IMR-90 (cell line): ENCODE measurements at regions of chr1 and their contacts with region 1.

Region 1: GRCh38 chr1:117592163-117592562 is 13.7 kb upstream of the TENT5C start:
- DNase-seq: no peak
- ATAC-seq: no peak
- H3K4me3 ChIP-seq: no peak overlapping the region
- H3K27ac ChIP-seq: no peak overlapping the region
- H3K4me1 ChIP-seq: no peaks in the 10 kb centered on the region
- H3K27me3 ChIP-seq: peaks cover 13% of the 10 kb centered on the region
- CTCF ChIP-seq: no peak
- POLR2A ChIP-seq: no peak
- RAD21 ChIP-seq: no peak

Region 2: GRCh38 chr1:117544509-117545109 is 47.6 kb before region 1 on chr1:
- CTCF ChIA-PET with region 1: no interaction called
- POLR2A ChIA-PET with region 1: no interaction called
- dilution Hi-C with region 1: no loop called
- in situ Hi-C with region 1: no loop called
- intact Hi-C with region 1: loop called (anchors 2 kb)
- DNase-seq: no peak
- ATAC-seq: no peak; the same call in 1 of the 2 replicates
- H3K4me3 ChIP-seq: no peak overlapping the region
- H3K27ac ChIP-seq: no peak overlapping the region
- H3K4me1 ChIP-seq: peaks cover 5% of the 10 kb centered on the region; the same call in 1 of the 2 replicates
- H3K27me3 ChIP-seq: no peaks in the 10 kb centered on the region
- CTCF ChIP-seq: no peak
- POLR2A ChIP-seq: no peak
- RAD21 ChIP-seq: no peak

Region 3: DNA sequence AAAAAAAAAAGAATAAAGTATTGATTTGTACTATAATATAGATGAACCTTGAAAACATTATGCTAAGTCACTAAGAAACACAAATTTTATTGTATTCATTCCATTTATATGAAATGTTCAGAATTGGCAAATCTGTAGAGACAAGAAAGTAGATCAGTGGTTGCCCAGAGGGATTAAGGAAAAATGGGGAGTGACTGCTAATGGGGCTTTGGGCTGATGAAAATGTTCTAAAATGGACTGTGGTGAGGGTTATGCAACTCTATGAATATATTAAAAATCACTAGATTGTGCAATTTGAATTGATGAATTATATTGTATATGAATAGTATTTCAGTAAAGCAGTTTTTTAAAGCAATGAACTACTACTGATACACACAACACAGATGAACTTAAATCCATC is 327.2 kb after region 1 on chr1:
- CTCF ChIA-PET with region 1: no interaction called
- POLR2A ChIA-PET with region 1: no interaction called
- dilution Hi-C with region 1: no loop called
- in situ Hi-C with region 1: no loop called
- intact Hi-C with region 1: no loop called
- DNase-seq: no peak
- ATAC-seq: no peak
- H3K4me3 ChIP-seq: no peak overlapping the region
- H3K27ac ChIP-seq: no peak overlapping the region
- H3K4me1 ChIP-seq: no peaks in the 10 kb centered on the region
- H3K27me3 ChIP-seq: no peaks in the 10 kb centered on the region
- CTCF ChIP-seq: no peak
- POLR2A ChIP-seq: no peak
- RAD21 ChIP-seq: no peak

Region 4: GRCh38 chr1:117985973-117986372 is 393.8 kb after region 1 on chr1:
- CTCF ChIA-PET with region 1: no interaction called
- POLR2A ChIA-PET with region 1: no interaction called
- dilution Hi-C with region 1: no loop called
- in situ Hi-C with region 1: no loop called
- intact Hi-C with region 1: no loop called
- DNase-seq: no peak
- ATAC-seq: no peak
- H3K4me3 ChIP-seq: no peak overlapping the region
- H3K27ac ChIP-seq: no peak overlapping the region
- H3K4me1 ChIP-seq: no peaks in the 10 kb centered on the region
- H3K27me3 ChIP-seq: peaks cover 3% of the 10 kb centered on the region
- CTCF ChIP-seq: no peak
- POLR2A ChIP-seq: no peak
- RAD21 ChIP-seq: no peak